PC-3 (cell line): ENCODE measurements at regions of chr9 and their contacts with region 1.

Region 1: DNA sequence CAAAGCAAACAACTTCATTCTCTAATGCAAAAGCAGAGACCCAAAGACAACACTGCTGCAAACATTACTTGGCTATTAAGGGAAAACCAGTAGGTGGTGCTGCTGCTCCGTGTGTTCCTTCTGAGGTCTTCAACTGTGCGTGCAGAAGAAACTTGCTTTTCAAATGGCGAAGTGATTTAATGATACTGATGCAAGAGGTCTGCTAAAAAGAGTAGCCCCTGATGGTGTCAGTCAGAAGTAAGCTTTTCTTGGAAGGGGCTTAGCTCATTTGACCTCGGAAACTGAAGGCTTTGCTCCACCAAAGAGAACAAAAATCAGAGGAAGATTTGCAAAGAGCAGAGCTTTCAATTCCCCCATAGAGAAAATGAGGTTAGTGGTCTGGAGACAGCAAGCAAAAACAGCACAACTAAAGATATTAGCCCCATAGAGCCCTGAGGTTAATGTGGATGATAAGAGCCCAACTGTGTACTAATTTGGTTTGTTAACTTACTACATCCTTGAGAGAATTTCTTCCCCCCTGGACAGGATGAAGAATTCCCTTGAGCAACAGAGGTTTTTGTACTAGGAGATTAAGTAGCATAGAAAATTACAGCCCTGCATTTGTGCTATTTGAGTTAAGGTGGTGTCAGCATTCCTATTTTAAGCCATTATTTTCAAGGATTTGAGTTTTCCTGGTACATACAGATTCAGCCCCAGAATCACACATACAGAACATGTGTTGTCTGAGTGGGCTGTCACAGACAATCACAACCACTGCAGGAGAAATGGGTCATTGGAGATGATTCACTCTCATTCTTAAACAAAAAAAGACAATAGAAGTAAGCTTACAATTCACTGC is 153.2 kb upstream of the C9orf72 start:
- DNase-seq: peak; percentile 77
- ATAC-seq: peak; percentile 81
- H3K4me3 ChIP-seq: no peak overlapping the region
- H3K27ac ChIP-seq: no peak overlapping the region
- H3K4me1 ChIP-seq: no peaks in the 10 kb centered on the region
- H3K27me3 ChIP-seq: peaks cover 14% of the 10 kb centered on the region; the same call in 1 of the 2 replicates
- CTCF ChIP-seq: peak; percentile 81

Region 2: GRCh38 chr9:27573634-27574590 is 152.6 kb before region 1 on chr9:
- CTCF ChIA-PET with region 1: no interaction called
- POLR2A ChIA-PET with region 1: no interaction called
- intact Hi-C with region 1: loop called (anchors 10 kb)
- DNase-seq: peak; percentile 97
- ATAC-seq: peak; percentile 69
- H3K4me3 ChIP-seq: peak overlapping the region; percentile 89
- H3K27ac ChIP-seq: peak overlapping the region; percentile 86
- H3K4me1 ChIP-seq: peaks cover 35% of the 10 kb centered on the region
- H3K27me3 ChIP-seq: no peaks in the 10 kb centered on the region
- CTCF ChIP-seq: no peak

Region 3: DNA sequence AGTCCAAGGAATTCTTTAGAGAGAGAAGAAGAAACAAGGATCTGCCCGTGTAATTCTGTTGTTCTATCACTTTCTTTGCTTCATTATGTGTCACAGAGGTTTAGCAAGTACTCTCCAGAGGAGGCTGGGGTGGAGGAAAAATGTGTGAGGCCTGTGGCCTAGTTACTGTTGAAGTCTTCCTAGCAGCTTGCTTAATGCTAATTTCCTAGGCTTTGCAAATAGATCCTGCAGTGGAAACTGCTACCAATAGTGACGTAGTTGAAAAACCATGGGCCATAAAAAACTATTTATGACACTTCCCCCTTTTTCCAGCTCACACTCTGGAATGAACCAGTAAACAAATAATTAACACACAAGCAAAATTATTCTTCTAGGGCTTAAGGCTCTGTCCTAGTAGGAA is 126.2 kb before region 1 on chr9:
- CTCF ChIA-PET with region 1: no interaction called
- POLR2A ChIA-PET with region 1: no interaction called
- intact Hi-C with region 1: loop called (anchors 10 kb)
- DNase-seq: no peak
- ATAC-seq: no peak
- H3K4me3 ChIP-seq: no peak overlapping the region
- H3K27ac ChIP-seq: no peak overlapping the region
- H3K4me1 ChIP-seq: no peaks in the 10 kb centered on the region
- H3K27me3 ChIP-seq: no peaks in the 10 kb centered on the region
- CTCF ChIP-seq: no peak

Region 4: GRCh38 chr9:27787891-27788290 is 61.4 kb after region 1 on chr9:
- CTCF ChIA-PET with region 1: no interaction called
- POLR2A ChIA-PET with region 1: no interaction called
- intact Hi-C with region 1: loop called (anchors 2 kb)
- DNase-seq: peak; percentile 33
- ATAC-seq: no peak
- H3K4me3 ChIP-seq: no peak overlapping the region
- H3K27ac ChIP-seq: no peak overlapping the region
- H3K4me1 ChIP-seq: no peaks in the 10 kb centered on the region
- H3K27me3 ChIP-seq: no peaks in the 10 kb centered on the region
- CTCF ChIP-seq: peak; percentile 40; the same call in 1 of the 2 replicates

Region 5: GRCh38 chr9:28073270-28073669 is 346.8 kb after region 1 on chr9:
- CTCF ChIA-PET with region 1: interaction called, 5 read pairs
- POLR2A ChIA-PET with region 1: no interaction called
- intact Hi-C with region 1: loop called (anchors 1 kb)
- DNase-seq: peak; percentile 62
- ATAC-seq: no peak
- H3K4me3 ChIP-seq: no peak overlapping the region
- H3K27ac ChIP-seq: no peak overlapping the region
- H3K4me1 ChIP-seq: no peaks in the 10 kb centered on the region
- H3K27me3 ChIP-seq: no peaks in the 10 kb centered on the region
- CTCF ChIP-seq: peak; percentile 62